A549 (cell line): ENCODE measurements at regions of chr1 and their contacts with region 1.

Region 1: DNA sequence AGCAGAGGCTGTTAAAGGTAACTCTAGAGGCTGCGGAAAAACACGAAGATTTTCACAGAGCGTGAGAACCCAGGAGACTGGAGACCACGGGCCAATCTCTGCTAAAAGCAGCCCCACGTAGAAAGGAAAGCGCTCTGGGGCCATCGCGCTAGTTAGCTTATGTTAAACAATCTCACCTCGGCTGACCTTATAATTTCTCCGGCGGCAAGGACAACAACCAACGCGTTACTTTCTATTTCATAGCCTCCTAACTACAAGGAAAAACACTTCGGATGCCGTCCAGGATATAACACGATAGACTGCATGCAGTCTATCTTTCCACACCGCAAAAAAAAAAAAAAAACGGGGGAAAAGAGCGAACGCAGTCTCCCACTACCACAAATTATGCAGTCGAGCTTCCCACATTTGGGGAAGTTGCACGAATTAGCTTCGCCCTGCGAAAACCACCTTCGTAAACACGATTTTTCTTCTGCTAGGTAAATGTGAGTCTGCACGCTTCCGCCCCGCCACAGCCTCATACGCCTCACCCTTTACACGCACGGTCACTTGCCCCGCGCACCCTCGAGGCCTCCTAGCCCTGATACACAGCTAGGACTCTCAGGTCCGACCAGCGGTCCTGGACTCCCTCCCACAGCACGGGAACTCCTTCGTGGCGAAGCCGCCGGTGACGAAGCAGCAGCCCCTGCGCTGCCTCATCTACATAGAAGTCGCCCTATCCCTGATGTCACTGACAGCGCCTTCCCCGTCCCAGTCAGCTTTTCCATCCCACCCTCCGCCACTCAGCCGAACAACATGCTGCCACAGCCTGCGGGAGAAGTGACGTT is 87.8 kb downstream of the PRKAB2 start:
- DNase-seq: peak; percentile 75 to 89
- ATAC-seq: peak; percentile 89 to 93
- H3K4me3 ChIP-seq: peak overlapping the region; percentile 52
- H3K27ac ChIP-seq: peak overlapping the region; percentile 88 to 92
- H3K4me1 ChIP-seq: 0 out of 3 replicates have a peak, but pooled peaks cover 3% of the 10 kb centered on the region
- CTCF ChIP-seq: no peak
- EP300 ChIP-seq: no peak
- POLR2A ChIP-seq: peak; percentile 98
- RAD21 ChIP-seq: no peak

Region 2: DNA sequence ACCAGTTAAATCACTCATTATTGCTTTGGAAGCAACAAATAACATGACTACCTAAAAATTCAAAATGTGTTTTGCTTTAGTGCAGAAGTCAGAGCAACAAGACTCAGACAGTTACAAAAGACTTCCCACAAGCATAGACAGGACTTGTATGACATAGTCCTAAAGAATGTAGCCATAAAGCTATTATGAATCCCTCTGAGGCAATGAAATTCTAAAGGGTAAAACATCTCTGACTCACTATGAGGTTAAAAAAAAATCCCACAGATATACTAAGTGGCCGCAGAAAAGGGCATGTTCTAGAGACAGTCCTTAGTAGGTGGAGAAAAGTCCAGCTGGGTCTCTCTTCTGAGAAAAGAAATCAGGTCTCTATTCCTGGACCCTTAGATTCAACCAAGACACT is 82.9 kb after region 1 on chr1:
- CTCF ChIA-PET with region 1: no interaction called
- POLR2A ChIA-PET with region 1: interaction called, 30 read pairs
- DNase-seq: peak; percentile 28 to 60
- ATAC-seq: peak; percentile 63 to 74
- H3K4me3 ChIP-seq: no peak overlapping the region
- H3K27ac ChIP-seq: peak overlapping the region; percentile 30 to 66; a peak in 4 of 6 replicates
- H3K4me1 ChIP-seq: peaks cover 44% of the 10 kb centered on the region
- CTCF ChIP-seq: no peak
- EP300 ChIP-seq: no peak
- POLR2A ChIP-seq: no peak
- RAD21 ChIP-seq: no peak

Region 3: GRCh38 chr1:147172168-147172992 is 87.9 kb after region 1 on chr1 and contains the start of gene PRKAB2:
- CTCF ChIA-PET with region 1: no interaction called
- POLR2A ChIA-PET with region 1: interaction called, 30 read pairs
- DNase-seq: peak; percentile 80 to 97
- ATAC-seq: peak; percentile 94 to 96
- H3K4me3 ChIP-seq: peak within 1 kb of the TSS; percentile 87
- H3K27ac ChIP-seq: peak within 1 kb of the TSS; percentile 88 to 93
- H3K4me1 ChIP-seq: peaks cover 36% of the 10 kb centered on the region
- CTCF ChIP-seq: peak; percentile 92
- EP300 ChIP-seq: no peak
- POLR2A ChIP-seq: peak; percentile 61
- RAD21 ChIP-seq: peak; percentile 60 to 90; a peak in 4 of 5 replicates
- polyA plus RNA-seq, gene PRKAB2: 20.3 and 22.4 TPM in 2 replicates

Region 4: GRCh38 chr1:147377263-147378246 is 293.1 kb after region 1 on chr1:
- CTCF ChIA-PET with region 1: no interaction called
- POLR2A ChIA-PET with region 1: no interaction called
- DNase-seq: no peak
- ATAC-seq: no peak
- H3K4me3 ChIP-seq: no peak overlapping the region
- H3K27ac ChIP-seq: no peak overlapping the region
- H3K4me1 ChIP-seq: no peaks in the 10 kb centered on the region
- CTCF ChIP-seq: no peak
- EP300 ChIP-seq: no peak
- POLR2A ChIP-seq: no peak
- RAD21 ChIP-seq: no peak